B cell (primary cell): ENCODE measurements at regions of chr6 and their contacts with region 1.

Region 1: GRCh38 chr6:34161857-34162515 is 16.1 kb upstream of the GRM4 start:
- DNase-seq: no peak
- ATAC-seq: no peak
- H3K4me3 ChIP-seq: no peak overlapping the region
- H3K4me3 Mint-ChIP-seq: no peak overlapping the region
- H3K27ac ChIP-seq: no peak overlapping the region
- H3K27ac Mint-ChIP-seq: no peak overlapping the region
- H3K4me1 ChIP-seq: no peaks in the 10 kb centered on the region
- H3K4me1 Mint-ChIP-seq: no peaks in the 10 kb centered on the region
- H3K27me3 ChIP-seq: no peaks in the 10 kb centered on the region
- H3K27me3 Mint-ChIP-seq: peaks cover 15% of the 10 kb centered on the region
- CTCF ChIP-seq: no peak

Region 2: DNA sequence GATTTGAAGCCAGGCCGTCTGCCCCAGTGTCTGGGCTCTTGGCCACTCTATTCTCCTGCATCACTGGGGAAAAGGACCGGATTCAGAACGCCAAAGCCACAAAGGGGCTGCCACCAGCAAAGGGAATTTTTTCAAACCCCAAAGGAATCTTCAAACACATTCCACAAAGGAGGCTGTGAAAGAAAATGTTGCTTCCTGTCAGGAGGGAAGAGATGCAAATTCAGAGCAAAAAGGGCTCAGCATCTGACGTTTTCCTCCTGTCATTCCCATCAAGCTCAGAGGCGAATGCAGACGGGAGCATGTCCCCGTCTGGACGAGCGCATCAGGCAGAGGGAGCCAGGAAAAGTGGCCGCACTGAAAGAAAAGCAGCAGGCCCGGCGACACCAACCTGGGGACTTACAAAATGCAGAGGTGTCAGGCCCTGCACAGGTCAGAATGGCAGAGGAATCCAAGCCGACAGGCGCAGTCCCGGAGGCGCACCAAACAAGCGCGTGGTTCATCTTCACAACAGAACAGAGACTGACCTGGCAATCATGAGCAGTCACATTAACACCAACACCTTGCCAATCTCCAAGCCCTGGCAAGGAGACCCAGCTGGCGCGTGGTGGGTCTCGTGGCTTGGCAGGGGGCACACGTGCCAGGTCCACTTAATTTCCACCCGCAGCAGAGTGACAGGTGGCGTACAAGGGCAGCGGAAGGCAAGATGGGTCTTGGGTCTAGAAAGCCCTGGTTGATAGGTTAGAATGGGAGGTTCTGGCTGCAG is 78.9 kb before region 1 on chr6:
- CTCF ChIA-PET with region 1: no interaction called
- POLR2A ChIA-PET with region 1: no interaction called
- intact Hi-C with region 1: no loop called
- DNase-seq: no peak
- ATAC-seq: no peak
- H3K4me3 ChIP-seq: no peak overlapping the region
- H3K4me3 Mint-ChIP-seq: no peak overlapping the region
- H3K27ac ChIP-seq: no peak overlapping the region
- H3K27ac Mint-ChIP-seq: no peak overlapping the region
- H3K4me1 ChIP-seq: no peaks in the 10 kb centered on the region
- H3K4me1 Mint-ChIP-seq: no peaks in the 10 kb centered on the region
- H3K27me3 ChIP-seq: no peaks in the 10 kb centered on the region
- H3K27me3 Mint-ChIP-seq: peaks cover 5% of the 10 kb centered on the region
- CTCF ChIP-seq: no peak

Region 3: DNA sequence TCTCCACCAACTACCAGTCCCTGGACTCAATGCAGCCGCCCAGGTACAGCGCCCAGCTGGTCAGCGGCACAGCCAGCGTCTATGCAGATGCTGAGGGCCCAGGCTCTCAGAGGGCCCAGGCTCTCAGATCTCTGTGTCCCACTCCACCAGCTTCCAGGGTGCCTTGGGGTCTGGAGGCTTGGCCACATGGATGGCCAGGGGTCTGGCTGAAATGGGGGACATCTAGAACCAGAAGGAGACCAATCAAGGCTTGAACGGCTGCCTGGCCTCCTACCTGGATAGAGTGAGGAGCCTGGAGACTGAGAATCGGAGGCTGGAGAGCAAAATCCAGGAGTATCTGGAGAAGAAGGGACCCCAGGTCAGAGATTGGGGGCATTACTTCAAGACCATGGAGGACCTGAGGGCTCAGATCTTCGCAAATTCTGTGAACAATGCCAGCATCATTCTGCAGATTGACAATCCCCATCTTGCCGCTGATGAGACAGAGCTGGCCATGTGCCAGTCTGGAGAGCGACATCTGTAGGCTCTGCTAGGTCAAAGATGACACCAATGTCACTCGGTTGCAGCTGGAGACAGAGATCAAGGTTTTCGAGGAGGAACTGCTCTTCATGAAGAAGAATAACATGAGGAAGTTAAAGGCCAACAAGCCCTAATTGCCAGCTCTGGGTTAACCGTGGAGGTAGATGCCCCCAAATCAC is 28.0 kb after region 1 on chr6:
- CTCF ChIA-PET with region 1: interaction called, 45 read pairs
- POLR2A ChIA-PET with region 1: interaction called, 3 read pairs
- intact Hi-C with region 1: loop called (anchors 1 kb)
- DNase-seq: peak; percentile 84
- ATAC-seq: peak; percentile 97
- H3K4me3 ChIP-seq: no peak overlapping the region
- H3K4me3 Mint-ChIP-seq: no peak overlapping the region
- H3K27ac ChIP-seq: peak overlapping the region; percentile 18 to 43
- H3K27ac Mint-ChIP-seq: peak overlapping the region; percentile 85
- H3K4me1 ChIP-seq: peaks cover 13 to 14% of the 10 kb centered on the region in 2 donors
- H3K4me1 Mint-ChIP-seq: peaks cover 13% of the 10 kb centered on the region
- H3K27me3 ChIP-seq: no peaks in the 10 kb centered on the region
- H3K27me3 Mint-ChIP-seq: no peaks in the 10 kb centered on the region
- CTCF ChIP-seq: peak; percentile 19